ENCODE measurements at regions of chr5 and their contacts with region 1.

Region 1: DNA sequence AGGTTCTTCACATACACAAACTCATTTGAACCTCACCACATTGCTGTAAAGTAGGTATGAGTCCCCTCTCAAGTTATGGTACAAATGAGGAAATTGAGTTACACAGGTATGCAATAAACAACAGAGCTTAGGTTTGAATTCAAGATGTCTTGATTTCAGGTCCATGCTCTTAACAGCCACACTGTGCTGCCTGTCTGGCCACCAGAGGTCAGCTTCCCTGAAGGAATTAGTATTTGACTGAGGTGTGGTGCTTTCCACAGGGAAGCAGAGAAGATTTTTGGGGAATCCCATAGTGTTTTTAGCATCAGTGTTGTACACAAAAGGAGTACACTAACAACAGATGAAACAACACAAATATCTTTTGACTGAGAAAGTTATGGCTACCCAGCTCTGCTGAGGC is 94.4 kb upstream of the ITGA1 start:
- DNase-seq: peak; percentile 34 to 66 (median 50)
- ATAC-seq: peak in 1 of 2 donors; percentile 69
- H3K4me3 ChIP-seq: no peak overlapping the region
- H3K27ac ChIP-seq: no peak overlapping the region
- H3K4me1 ChIP-seq: no peaks in the 10 kb centered on the region
- H3K27me3 ChIP-seq: no peaks in the 10 kb centered on the region

Region 2: DNA sequence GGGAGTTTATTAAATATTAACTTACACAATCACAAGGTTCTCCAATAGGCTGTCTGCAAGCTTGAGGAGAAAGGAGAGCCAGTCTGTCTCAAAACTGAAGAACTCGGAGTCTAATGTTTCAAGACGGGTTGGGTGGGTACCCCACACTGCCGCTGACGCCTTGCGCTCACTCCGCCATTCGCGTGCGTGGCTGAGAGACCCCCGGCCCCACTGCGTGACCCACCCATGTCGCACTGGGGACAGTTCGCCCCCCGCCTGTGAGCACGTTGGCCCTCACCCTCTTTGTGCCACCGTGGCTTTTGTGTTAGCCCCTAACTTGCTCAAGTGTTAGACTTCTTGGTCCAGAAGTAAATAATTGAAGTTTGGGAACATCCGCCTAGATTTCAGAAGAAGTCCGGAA is 175.6 kb before region 1 on chr5:
- intact Hi-C with region 1: no loop called
- DNase-seq: peak in 1 of 3 donors; percentile 28
- ATAC-seq: no peak
- H3K4me3 ChIP-seq: no peak overlapping the region
- H3K27ac ChIP-seq: no peak overlapping the region
- H3K4me1 ChIP-seq: no peaks in the 10 kb centered on the region
- H3K27me3 ChIP-seq: no peaks in the 10 kb centered on the region

Region 3: GRCh38 chr5:52589794-52590193 is 103.5 kb before region 1 on chr5:
- intact Hi-C with region 1: no loop called
- DNase-seq: no peak
- ATAC-seq: no peak
- H3K4me3 ChIP-seq: no peak overlapping the region
- H3K27ac ChIP-seq: no peak overlapping the region
- H3K4me1 ChIP-seq: no peaks in the 10 kb centered on the region
- H3K27me3 ChIP-seq: no peaks in the 10 kb centered on the region

Region 4: DNA sequence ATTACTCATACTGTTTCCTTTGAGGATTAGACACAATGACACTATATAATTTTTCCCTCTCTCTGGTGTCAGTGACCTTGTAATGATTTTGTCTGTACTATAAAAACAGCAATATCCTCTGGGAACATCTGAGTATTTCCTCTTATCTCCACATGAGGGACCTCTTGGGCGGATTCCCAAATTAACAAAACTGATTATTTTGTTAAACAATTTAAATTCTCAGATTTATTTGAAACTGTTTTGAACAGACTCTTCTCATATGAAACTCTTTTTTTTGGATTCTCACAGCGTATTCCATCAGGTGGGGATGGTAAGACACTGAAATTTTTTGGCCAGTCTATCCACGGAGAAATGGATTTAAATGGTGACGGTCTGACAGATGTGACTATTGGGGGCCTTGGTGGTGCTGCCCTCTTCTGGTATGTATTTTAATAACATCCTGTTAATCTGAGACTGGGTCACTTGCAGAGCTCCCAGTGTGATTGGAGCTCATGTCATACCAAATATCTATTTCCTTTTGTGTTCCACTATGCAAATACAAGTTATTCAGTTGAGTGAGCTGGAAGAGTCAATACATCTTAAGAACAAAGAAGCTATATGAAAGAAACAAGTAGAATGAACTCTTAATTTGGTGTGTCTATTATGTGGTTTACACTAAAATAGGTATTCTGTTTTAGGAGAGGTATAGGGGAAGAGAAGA is 222.0 kb after region 1 on chr5:
- intact Hi-C with region 1: loop called in 3 of 4 experiments (anchors 5 to 10 kb)
- DNase-seq: peak in 2 of 3 donors; percentile 13 to 48
- ATAC-seq: peak; percentile 92 to 94
- H3K4me3 ChIP-seq: peak overlapping the region; percentile 44
- H3K27ac ChIP-seq: no peak overlapping the region
- H3K4me1 ChIP-seq: no peaks in the 10 kb centered on the region
- H3K27me3 ChIP-seq: no peaks in the 10 kb centered on the region

Measured in right cardiac atrium (tissue), 5 donors.